CD4-positive, alpha-beta memory T cell (primary cell): ENCODE measurements at regions of chr6 and their contacts with region 1.

Region 1: GRCh38 chr6:154786132-154786868 is 53.1 kb downstream of the SCAF8 start:
- DNase-seq: no peak
- H3K4me3 ChIP-seq: no peak overlapping the region
- H3K4me3 Mint-ChIP-seq: no peak overlapping the region
- H3K27ac ChIP-seq: no peak overlapping the region
- H3K27ac Mint-ChIP-seq: peak overlapping the region in 1 of 7 donors; percentile 7
- H3K4me1 ChIP-seq: peaks cover 23% of the 10 kb centered on the region
- H3K4me1 Mint-ChIP-seq: peaks cover 21 to 55% (median 39%) of the 10 kb centered on the region in 4 donors
- H3K27me3 ChIP-seq: no peaks in the 10 kb centered on the region
- H3K27me3 Mint-ChIP-seq: no peaks in the 10 kb centered on the region

Region 2: GRCh38 chr6:154767003-154767723 is 19.1 kb before region 1 on chr6:
- CTCF ChIA-PET with region 1: interaction called, 3 read pairs
- POLR2A ChIA-PET with region 1: no interaction called
- intact Hi-C with region 1: loop called (anchors 2 kb)
- DNase-seq: no peak
- H3K4me3 ChIP-seq: no peak overlapping the region
- H3K4me3 Mint-ChIP-seq: peak overlapping the region in 1 of 8 donors; percentile 39
- H3K27ac ChIP-seq: no peak overlapping the region
- H3K27ac Mint-ChIP-seq: peak overlapping the region in 2 of 7 donors; percentile 18 to 65
- H3K4me1 ChIP-seq: peaks cover 88% of the 10 kb centered on the region
- H3K4me1 Mint-ChIP-seq: peaks cover 65 to 92% (median 82%) of the 10 kb centered on the region in 4 donors
- H3K27me3 ChIP-seq: no peaks in the 10 kb centered on the region
- H3K27me3 Mint-ChIP-seq: no peaks in the 10 kb centered on the region

Region 3: GRCh38 chr6:155301867-155302266 is 515.6 kb after region 1 on chr6:
- CTCF ChIA-PET with region 1: no interaction called
- POLR2A ChIA-PET with region 1: no interaction called
- intact Hi-C with region 1: no loop called
- DNase-seq: no peak
- H3K4me3 ChIP-seq: no peak overlapping the region
- H3K4me3 Mint-ChIP-seq: no peak overlapping the region
- H3K27ac ChIP-seq: no peak overlapping the region
- H3K27ac Mint-ChIP-seq: no peak overlapping the region
- H3K4me1 ChIP-seq: no peaks in the 10 kb centered on the region
- H3K4me1 Mint-ChIP-seq: peaks cover 6 to 10% (median 10%) of the 10 kb centered on the region in 4 donors
- H3K27me3 ChIP-seq: no peaks in the 10 kb centered on the region
- H3K27me3 Mint-ChIP-seq: no peaks in the 10 kb centered on the region